Activated naive CD8-positive, alpha-beta T cell treated with anti-CD3 and anti-CD28 coated beads, Interleukin-2, amount 10 ng/mL, durations not matched to agents 7 days and 5 days (primary cell): ENCODE measurements at regions of chr3 and their contacts with region 1.

Region 1: GRCh38 chr3:125141596-125142419 is 70.7 kb downstream of the SLC12A8 start:
- DNase-seq: peak; percentile 89
- ATAC-seq: peak; percentile 91
- H3K4me3 Mint-ChIP-seq: peak overlapping the region; percentile 88
- H3K27ac Mint-ChIP-seq: peak overlapping the region; percentile 99
- H3K4me1 Mint-ChIP-seq: peaks cover 47% of the 10 kb centered on the region
- H3K27me3 Mint-ChIP-seq: peaks cover 3% of the 10 kb centered on the region

Region 2: GRCh38 chr3:124878561-124879336 is 263.1 kb before region 1 on chr3:
- POLR2A ChIA-PET with region 1: no interaction called
- DNase-seq: no peak
- ATAC-seq: peak; percentile 82
- H3K4me3 Mint-ChIP-seq: peak overlapping the region; percentile 20
- H3K27ac Mint-ChIP-seq: no peak overlapping the region
- H3K4me1 Mint-ChIP-seq: peaks cover 9% of the 10 kb centered on the region
- H3K27me3 Mint-ChIP-seq: peaks cover 39% of the 10 kb centered on the region

Region 3: DNA sequence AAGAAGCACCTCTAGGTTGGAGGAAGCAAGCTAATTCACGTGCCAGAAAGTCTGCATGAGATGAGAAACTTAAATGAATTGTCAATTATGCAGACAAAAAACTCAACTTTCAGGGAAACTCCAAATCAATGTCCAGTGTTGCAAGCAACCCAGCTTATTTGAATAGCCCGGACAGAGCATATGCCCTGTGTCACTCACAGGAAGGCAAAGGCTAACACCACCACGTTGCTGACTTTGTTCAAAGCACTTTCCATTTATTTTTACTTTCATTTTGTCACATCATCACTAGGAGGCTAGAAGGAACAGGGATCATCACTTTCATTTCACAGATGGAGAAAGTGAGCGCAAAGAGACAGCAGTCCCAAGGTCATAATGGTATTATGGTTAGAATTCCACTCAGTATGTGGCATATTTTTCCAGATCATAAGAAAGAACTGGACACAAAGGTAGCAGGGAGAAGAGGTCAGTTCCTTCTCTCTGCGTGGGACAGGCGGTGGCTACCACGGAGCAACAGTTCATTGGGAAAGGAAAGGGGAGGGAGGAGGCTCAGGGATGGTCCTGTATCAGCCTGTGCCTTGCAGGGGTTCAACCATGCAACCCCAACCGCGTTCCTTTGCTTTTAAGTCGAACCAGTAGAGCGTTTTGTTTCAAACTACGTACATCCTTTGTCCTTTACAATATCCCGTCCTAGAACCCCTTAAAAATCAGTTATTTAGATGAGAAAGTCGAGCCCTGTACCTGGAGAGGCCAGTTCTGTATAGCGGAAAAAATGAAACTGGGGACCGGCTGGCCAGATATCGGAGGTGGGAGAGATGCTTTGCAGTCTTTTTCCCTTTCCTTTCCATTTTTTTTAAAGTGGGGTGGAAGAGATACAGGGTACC is 87.1 kb before region 1 on chr3:
- POLR2A ChIA-PET with region 1: interaction called, 31 read pairs
- DNase-seq: no peak
- ATAC-seq: no peak
- H3K4me3 Mint-ChIP-seq: peak overlapping the region; percentile 97
- H3K27ac Mint-ChIP-seq: peak overlapping the region; percentile 96
- H3K4me1 Mint-ChIP-seq: peaks cover 48% of the 10 kb centered on the region
- H3K27me3 Mint-ChIP-seq: no peaks in the 10 kb centered on the region

Region 4: GRCh38 chr3:125119752-125120378 is 21.9 kb before region 1 on chr3:
- POLR2A ChIA-PET with region 1: interaction called, 27 read pairs
- DNase-seq: peak; percentile 52
- ATAC-seq: peak; percentile 55
- H3K4me3 Mint-ChIP-seq: peak overlapping the region; percentile 58
- H3K27ac Mint-ChIP-seq: peak overlapping the region; percentile 91
- H3K4me1 Mint-ChIP-seq: peaks cover 43% of the 10 kb centered on the region
- H3K27me3 Mint-ChIP-seq: no peaks in the 10 kb centered on the region

Region 5: DNA sequence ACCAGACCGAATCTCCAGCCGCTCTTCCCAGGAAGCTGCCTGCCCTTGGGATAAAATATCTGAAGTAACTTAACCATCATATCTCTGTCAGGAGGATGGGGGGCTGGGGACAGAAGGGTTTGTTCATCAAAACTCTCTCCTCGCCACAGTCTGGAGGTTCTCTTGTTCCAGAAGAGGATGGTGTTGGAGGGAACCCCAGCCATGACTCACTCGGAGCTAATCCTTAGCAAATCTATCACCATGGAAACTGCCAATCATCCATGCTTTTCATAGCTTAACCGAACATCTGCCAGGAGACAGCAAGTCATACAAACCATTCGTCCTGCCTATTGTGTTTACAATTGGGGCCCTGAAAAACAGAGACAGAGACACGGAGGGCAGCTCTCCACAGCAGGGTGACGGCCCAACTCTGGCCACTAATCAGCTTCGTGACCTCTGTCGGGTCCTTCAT is 12.3 kb before region 1 on chr3:
- POLR2A ChIA-PET with region 1: interaction called, 11 read pairs
- DNase-seq: no peak
- ATAC-seq: no peak
- H3K4me3 Mint-ChIP-seq: no peak overlapping the region
- H3K27ac Mint-ChIP-seq: no peak overlapping the region
- H3K4me1 Mint-ChIP-seq: peaks cover 47% of the 10 kb centered on the region
- H3K27me3 Mint-ChIP-seq: no peaks in the 10 kb centered on the region